ENCODE measurements at regions of chr6 and their contacts with region 1.

Region 1: DNA sequence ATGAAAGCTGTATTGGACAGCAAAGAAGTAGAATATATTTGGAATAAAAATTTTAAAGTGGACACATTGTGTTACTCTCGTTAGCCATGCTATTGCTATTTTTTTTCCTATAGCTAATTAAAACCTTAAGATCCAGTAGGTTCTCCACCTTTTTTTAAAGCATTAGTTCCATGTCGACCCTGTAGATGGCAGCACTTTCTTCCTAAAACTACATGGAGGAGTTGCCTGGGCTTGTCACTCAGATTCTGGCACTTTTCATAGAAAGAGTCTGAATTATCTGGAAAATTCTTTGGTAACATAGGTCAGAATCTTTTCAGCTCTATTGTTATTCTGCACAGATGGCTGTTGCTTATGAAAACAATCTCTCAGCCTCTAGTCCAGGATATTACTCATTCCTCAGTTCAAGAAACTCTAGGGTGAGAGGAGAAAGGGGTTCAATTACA is 42.0 kb upstream of the ESR1 start:
- DNase-seq: no peak
- ATAC-seq: peak; percentile 70 to 87 (median 76)
- H3K4me3 ChIP-seq: no peak overlapping the region
- H3K27ac ChIP-seq: no peak overlapping the region
- H3K4me1 ChIP-seq: no peaks in the 10 kb centered on the region
- H3K27me3 ChIP-seq: no peaks in the 10 kb centered on the region
- CTCF ChIP-seq: peak; percentile 80

Region 2: DNA sequence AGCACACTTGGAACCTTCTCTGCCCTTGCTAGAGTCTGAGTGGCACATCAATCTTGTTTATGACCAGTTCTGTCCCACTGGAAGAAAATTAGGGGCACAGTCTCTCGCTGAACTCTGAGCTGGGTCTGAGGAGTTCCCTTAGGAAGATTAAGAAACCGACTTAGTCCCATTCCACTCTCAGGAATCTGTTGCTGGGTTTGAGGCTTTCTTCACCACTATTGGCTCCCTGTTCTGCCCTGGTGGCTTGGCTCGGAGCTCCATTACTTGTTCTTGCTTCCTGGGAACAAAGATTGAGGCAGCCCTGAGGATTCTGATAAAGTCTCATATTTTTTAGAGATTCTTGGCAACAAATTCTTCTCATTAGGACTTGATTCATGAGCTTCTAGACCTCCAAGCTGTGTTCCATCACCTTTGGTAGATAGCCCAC is 155.9 kb before region 1 on chr6:
- intact Hi-C with region 1: no loop called
- DNase-seq: peak; percentile 27 to 51
- ATAC-seq: peak in 1 of 4 donors; percentile 62
- H3K4me3 ChIP-seq: no peak overlapping the region
- H3K27ac ChIP-seq: no peak overlapping the region
- H3K4me1 ChIP-seq: no peaks in the 10 kb centered on the region
- H3K27me3 ChIP-seq: no peaks in the 10 kb centered on the region
- CTCF ChIP-seq: no peak

Region 3: DNA sequence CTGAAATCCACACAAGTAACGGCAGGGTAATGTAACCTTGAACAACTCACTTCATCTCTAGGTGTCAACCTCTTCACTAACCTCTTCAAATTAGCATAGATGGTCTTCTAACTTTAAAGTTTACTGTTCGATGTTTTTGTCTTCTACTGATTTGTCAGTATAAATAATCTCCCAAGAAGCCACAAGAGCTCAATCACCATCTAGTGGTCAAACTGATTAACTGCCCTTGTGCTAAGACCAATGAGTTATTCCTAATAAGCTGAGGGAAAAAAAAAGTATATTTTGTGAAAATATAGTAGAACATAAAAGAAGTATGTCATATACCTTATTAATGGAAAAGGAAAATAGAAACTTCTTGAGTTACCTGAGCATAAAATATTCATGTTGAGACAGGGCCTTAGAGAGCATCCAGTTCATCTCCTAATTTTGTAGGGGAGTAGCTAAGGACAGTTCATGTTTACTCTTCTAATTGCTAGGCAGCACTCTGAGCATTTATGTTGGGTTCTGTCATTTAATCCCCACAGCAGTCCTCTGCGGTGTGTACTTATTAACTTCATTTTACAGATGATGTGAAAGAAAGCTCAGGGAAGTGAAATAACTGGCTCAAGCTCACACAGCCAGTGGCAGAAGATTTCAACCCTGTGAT is 359.1 kb after region 1 on chr6:
- intact Hi-C with region 1: loop called (anchors 1 to 2 kb)
- DNase-seq: no peak
- ATAC-seq: peak; percentile 58 to 84 (median 68)
- H3K4me3 ChIP-seq: no peak overlapping the region
- H3K27ac ChIP-seq: peak overlapping the region; percentile 34
- H3K4me1 ChIP-seq: peaks cover 18% of the 10 kb centered on the region
- H3K27me3 ChIP-seq: no peaks in the 10 kb centered on the region
- CTCF ChIP-seq: peak; percentile 88

Region 4: DNA sequence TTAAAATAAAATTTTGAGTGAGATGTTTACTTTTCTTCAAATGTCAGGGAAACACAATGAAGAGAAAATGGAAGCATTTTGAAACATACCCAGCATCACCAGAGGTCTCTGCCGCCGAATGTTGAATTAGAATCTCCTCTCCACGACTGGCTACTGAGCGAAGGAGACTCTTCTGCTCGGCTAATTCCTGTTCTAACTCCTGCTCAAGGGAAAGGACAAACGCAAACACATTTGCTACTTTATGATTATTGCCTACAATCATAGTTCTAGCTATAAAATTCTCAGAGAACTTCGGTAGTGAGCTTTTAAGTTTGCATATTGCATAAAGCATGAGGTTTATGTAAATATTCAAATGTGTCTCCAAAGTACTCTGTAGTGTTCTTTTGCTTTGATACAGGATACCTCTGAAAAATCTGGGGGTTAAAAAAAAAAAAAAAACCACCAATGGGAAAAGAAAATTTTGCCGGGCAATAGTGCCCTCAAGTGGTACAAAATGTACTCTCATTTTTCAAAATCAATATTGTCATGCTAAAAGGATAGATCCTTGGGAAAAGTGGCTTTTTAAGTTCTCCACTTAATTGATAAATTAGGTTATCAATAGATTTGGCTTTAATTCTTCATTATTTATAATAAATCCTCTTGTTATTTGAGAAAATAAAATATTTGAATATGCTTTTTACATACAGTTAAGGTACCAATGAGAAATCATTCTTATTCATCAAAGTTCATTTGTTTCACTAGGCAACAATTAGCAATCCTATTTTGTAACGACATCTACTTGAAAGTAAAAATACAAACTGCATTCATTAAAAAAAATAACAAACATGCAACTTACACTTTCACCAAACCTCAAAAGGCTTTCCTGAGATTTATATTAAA is 502.7 kb after region 1 on chr6:
- intact Hi-C with region 1: loop called (anchors 5 to 10 kb)
- DNase-seq: no peak
- ATAC-seq: peak in 3 of 4 donors; percentile 24 to 42 (median 34)
- H3K4me3 ChIP-seq: peak overlapping the region; percentile 40
- H3K27ac ChIP-seq: peak overlapping the region; percentile 46
- H3K4me1 ChIP-seq: peaks cover 65% of the 10 kb centered on the region
- H3K27me3 ChIP-seq: no peaks in the 10 kb centered on the region
- CTCF ChIP-seq: peak; percentile 68